Sigmoid colon (tissue), 7 donors: ENCODE measurements at regions of chr9 and their contacts with region 1.

Region 1: GRCh38 chr9:84955971-84956370 is 286.4 kb downstream of the NTRK2 start:
- DNase-seq: no peak
- H3K4me3 ChIP-seq: no peak overlapping the region
- H3K27ac ChIP-seq: no peak overlapping the region
- H3K4me1 ChIP-seq: peaks cover 0 to 4% (median 0%) of the 10 kb centered on the region in 4 donors
- H3K27me3 ChIP-seq: no peaks in the 10 kb centered on the region
- CTCF ChIP-seq: no peak
- EP300 ChIP-seq: no peak
- POLR2A ChIP-seq: no peak

Region 2: DNA sequence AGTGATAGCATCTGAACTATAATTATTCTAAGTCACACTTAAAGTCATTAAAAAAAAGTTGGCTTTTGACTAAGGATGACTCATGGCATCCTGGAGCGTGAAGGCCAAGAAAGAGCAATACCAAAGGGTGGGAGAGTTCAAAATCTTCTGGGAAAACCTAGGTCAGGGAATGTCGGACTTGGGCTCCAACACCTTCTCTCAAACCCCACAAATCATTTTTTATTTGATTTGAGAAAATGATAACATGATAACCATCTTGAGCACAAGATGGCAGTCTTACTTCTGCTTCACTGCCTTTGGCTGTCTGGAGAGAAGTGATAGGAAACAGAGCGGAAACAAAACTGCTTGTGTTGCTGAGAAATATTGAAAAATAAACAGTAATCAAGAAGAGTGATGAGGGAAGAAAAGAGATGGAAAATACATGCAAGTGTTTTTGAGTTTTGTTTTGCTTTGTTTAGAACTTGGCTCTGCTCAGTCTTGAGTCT is 303.4 kb before region 1 on chr9:
- intact Hi-C with region 1: no loop called
- DNase-seq: no peak
- H3K4me3 ChIP-seq: no peak overlapping the region
- H3K27ac ChIP-seq: no peak overlapping the region
- H3K4me1 ChIP-seq: no peaks in the 10 kb centered on the region
- H3K27me3 ChIP-seq: no peaks in the 10 kb centered on the region
- CTCF ChIP-seq: no peak
- EP300 ChIP-seq: no peak
- POLR2A ChIP-seq: no peak

Region 3: GRCh38 chr9:84697509-84698114 is 258.4 kb before region 1 on chr9:
- intact Hi-C with region 1: loop called (anchors 2 kb)
- DNase-seq: no peak
- H3K4me3 ChIP-seq: no peak overlapping the region
- H3K27ac ChIP-seq: no peak overlapping the region
- H3K4me1 ChIP-seq: no peaks in the 10 kb centered on the region
- H3K27me3 ChIP-seq: no peaks in the 10 kb centered on the region
- CTCF ChIP-seq: peak in 3 of 4 experiments; percentile 30 to 42 (median 42)
- EP300 ChIP-seq: no peak
- POLR2A ChIP-seq: no peak

Region 4: DNA sequence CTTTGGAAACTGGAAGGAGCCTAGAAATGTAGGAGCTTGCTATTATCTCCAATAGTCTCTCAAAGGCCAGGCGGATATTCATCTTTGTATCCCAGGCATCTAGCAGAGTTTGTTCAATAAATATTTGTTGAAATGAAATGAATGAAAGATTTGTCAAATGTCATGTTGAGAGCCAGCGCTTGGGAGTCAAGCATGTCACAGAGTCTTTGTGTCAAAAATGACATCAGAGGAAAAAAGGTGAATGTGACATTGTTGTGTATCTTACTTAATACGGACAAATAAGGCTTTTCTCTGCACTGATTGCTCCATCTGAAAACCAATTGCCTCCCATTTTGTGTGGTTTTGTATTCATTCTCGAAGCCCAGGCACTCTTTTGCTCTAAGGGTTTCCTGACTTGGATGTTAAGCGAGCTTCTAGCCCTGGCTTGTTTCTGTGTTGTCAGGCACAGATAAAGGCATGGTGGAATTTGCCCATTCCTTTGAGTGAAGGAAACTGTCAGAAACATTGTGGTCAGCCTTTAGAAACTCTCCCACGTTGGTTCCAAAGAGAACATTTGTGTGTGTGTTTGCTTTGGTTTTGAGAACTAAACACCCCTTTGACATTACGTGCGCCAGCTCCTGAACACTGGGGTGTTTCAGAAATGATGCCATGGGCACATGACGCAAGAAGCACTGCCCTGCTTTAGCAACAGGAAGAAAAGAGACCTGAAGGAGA is 34.3 kb after region 1 on chr9:
- intact Hi-C with region 1: no loop called
- DNase-seq: no peak
- H3K4me3 ChIP-seq: no peak overlapping the region
- H3K27ac ChIP-seq: no peak overlapping the region
- H3K4me1 ChIP-seq: no peaks in the 10 kb centered on the region
- H3K27me3 ChIP-seq: no peaks in the 10 kb centered on the region
- CTCF ChIP-seq: no peak
- EP300 ChIP-seq: no peak
- POLR2A ChIP-seq: no peak

Region 5: GRCh38 chr9:85302938-85303756 is 347.2 kb after region 1 on chr9:
- intact Hi-C with region 1: no loop called
- DNase-seq: no peak
- H3K4me3 ChIP-seq: no peak overlapping the region
- H3K27ac ChIP-seq: no peak overlapping the region
- H3K4me1 ChIP-seq: no peaks in the 10 kb centered on the region
- H3K27me3 ChIP-seq: no peaks in the 10 kb centered on the region
- CTCF ChIP-seq: no peak
- EP300 ChIP-seq: no peak
- POLR2A ChIP-seq: no peak